ENCODE measurements at regions of chr1 and their contacts with region 1.

Region 1: DNA sequence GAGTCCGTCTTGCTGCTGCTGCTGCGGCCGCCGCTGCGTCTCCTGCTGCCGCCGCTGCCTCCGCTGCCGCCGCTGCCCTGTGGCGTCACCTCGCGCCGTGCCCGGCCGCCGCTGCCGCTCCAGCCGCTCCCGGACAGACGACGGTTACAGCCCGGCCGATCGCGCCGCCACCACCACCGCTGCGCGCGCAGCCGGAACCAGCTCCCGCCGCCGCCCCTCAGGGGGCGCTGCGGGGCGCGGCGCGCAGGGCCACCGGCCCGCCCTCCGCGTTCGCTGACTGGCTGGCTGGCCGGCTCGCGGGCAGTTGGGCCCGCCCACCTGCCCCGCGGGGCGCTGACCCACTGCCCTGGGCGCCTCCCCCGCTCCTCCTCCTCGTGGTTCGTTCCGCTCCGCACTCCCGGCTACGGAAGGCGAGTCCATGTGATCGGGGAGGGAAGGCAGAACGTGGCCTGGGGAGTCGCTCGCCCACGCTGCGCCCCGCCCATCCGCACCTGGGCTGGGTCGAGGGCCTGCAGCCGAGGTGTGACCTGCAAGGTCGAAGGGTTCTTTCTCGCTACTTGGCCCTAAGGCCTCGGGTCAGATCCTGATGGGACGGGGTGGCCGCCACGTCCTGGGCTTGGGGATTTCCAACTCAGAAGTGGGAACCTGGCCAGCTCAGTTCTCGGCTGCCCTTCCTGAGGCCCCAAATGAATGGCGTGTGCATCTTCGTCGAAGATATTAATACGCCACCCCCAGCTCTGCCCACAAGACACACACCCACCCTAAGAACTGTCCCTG is at the start of gene PTP4A2:
- DNase-seq: peak; percentile 87
- H3K4me3 Mint-ChIP-seq: peak within 1 kb of the TSS; percentile 99
- H3K27ac Mint-ChIP-seq: peak within 1 kb of the TSS; percentile 99
- H3K4me1 Mint-ChIP-seq: peaks cover 68% of the 10 kb centered on the region
- H3K27me3 Mint-ChIP-seq: no peaks in the 10 kb centered on the region
- total RNA-seq, gene PTP4A2: 240 to 263 TPM

Region 2: GRCh38 chr1:31065310-31066217 is 872.8 kb before region 1 on chr1 and contains the start of gene PUM1:
- CTCF ChIA-PET with region 1: no interaction called
- intact Hi-C with region 1: loop called (anchors 10 kb)
- DNase-seq: peak; percentile 99
- H3K4me3 Mint-ChIP-seq: peak within 1 kb of the TSS; percentile 99
- H3K27ac Mint-ChIP-seq: peak within 1 kb of the TSS; percentile 96
- H3K4me1 Mint-ChIP-seq: peaks cover 27% of the 10 kb centered on the region
- H3K27me3 Mint-ChIP-seq: no peaks in the 10 kb centered on the region
- total RNA-seq, gene PUM1: 84.9 to 89.7 TPM

Region 3: GRCh38 chr1:31891280-31891679 is 47.1 kb before region 1 on chr1:
- CTCF ChIA-PET with region 1: interaction called, 6 read pairs
- intact Hi-C with region 1: loop called (anchors 1 kb)
- DNase-seq: peak; percentile 81
- H3K4me3 Mint-ChIP-seq: no peak overlapping the region
- H3K27ac Mint-ChIP-seq: peak overlapping the region; percentile 90
- H3K4me1 Mint-ChIP-seq: peaks cover 38% of the 10 kb centered on the region
- H3K27me3 Mint-ChIP-seq: no peaks in the 10 kb centered on the region

Region 4: GRCh38 chr1:31984419-31985347 is 46.3 kb after region 1 on chr1:
- CTCF ChIA-PET with region 1: interaction called, 3 read pairs
- intact Hi-C with region 1: loop called (anchors 2 kb)
- DNase-seq: peak; percentile 65
- H3K4me3 Mint-ChIP-seq: peak overlapping the region; percentile 44
- H3K27ac Mint-ChIP-seq: peak overlapping the region; percentile 92
- H3K4me1 Mint-ChIP-seq: peaks cover 52% of the 10 kb centered on the region
- H3K27me3 Mint-ChIP-seq: no peaks in the 10 kb centered on the region

Region 5: DNA sequence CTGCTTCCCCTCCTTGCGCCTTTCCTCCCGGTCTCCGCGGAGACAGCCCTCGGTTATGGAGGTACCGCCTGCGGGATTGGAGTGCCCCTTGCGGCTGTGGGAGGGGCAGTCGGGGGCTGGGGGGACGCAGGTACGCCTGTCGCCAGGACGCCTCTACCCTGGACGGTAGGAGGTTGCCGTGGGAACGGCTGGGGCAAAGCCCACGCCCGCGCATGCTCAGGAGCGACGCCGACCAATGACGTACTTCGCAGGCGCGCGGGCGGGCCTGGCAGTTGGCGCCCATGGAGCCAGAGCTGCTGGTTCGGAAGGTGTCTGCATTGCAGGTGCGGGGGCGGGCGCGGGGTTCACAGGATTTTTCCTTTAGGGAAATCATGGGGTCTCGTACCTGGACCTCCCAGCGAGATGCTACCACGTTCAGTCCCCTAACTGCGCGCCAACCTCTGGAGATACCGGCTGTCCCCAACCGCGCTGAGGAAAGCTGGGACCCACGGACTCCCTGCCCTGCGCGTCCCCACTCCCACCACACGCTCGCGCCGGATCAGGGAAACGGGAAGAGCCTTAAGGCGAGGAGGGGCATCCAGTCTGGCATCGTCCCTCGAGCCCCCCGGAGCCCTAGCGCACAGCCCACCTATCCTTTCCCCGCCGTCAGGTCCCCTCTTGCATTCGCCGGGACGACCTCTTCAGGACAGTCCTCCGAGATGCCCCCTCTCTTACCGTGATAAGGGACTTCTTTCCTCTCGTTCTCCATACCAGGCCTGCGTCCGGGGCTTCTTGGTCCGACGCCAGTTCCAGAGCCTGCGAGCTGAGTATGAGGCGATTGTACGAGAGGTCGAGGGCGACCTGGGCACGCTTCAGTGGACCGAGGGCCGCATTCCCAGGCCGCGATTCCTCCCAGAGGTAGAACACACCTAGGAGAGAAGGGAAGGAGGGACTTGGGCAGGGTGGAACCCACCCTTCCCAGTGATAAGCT is 267.3 kb after region 1 on chr1 and contains the start of gene IQCC:
- CTCF ChIA-PET with region 1: no interaction called
- intact Hi-C with region 1: no loop called
- DNase-seq: peak; percentile 90
- H3K4me3 Mint-ChIP-seq: peak within 1 kb of the TSS; percentile 90
- H3K27ac Mint-ChIP-seq: peak within 1 kb of the TSS; percentile 76
- H3K4me1 Mint-ChIP-seq: peaks cover 26% of the 10 kb centered on the region
- H3K27me3 Mint-ChIP-seq: no peaks in the 10 kb centered on the region
- total RNA-seq, gene IQCC: 4.8 to 5.9 TPM

Region 6: DNA sequence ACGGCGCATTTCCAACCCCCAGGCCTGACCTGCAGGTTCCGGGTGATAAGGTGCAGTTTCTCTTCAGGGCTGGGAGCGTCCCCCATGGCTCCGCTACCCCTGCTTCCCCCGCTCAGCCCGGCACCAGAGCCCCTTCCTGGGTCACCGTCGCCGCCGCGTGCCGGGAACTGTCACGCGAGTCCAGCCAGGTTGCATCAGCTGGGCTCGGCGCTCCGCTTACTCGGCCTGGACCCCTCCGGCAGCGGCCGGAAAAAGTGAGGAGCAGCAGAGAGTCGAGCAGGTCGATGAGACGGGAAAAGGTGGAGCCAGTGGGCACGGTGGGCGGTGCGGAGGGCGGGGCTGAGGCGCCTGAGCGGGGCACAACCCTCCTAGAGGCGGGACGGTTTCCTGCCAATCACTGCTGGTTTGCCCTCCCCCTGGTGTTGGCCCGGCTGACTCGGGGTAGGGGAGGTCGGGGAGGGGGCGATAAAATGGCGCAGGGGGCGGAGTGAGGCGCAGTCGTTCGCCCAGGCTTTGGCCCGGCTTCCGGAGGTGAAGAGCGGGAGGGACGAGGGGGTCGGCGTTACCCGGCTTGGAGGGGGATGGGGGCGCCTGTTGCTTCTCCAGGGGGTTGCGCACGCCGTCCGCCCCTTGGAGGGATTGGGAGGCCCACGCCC is 878.9 kb after region 1 on chr1 and contains the starts of genes S100PBP and YARS1:
- CTCF ChIA-PET with region 1: no interaction called
- intact Hi-C with region 1: loop called (anchors 10 kb)
- DNase-seq: peak; percentile 100
- H3K4me3 Mint-ChIP-seq: peak within 1 kb of the TSS; percentile 92
- H3K27ac Mint-ChIP-seq: peak within 1 kb of the TSS; percentile 94
- H3K4me1 Mint-ChIP-seq: peaks cover 51% of the 10 kb centered on the region
- H3K27me3 Mint-ChIP-seq: no peaks in the 10 kb centered on the region
- total RNA-seq, gene S100PBP: 26.1 to 31.2 TPM
- total RNA-seq, gene YARS1: 293 to 312 TPM

Measured in activated naive CD4-positive, alpha-beta T cell treated with anti-CD3 and anti-CD28 coated beads for 36 hours (primary cell).